Colonic mucosa (tissue), 4 donors: ENCODE measurements at regions of chr5 and their contacts with region 1.

Region 1: GRCh38 chr5:104186100-104186499 is 623.5 kb upstream of the NUDT12 start:
- DNase-seq: no peak
- H3K4me3 ChIP-seq: no peak overlapping the region
- H3K27ac ChIP-seq: no peak overlapping the region
- H3K4me1 ChIP-seq: no peaks in the 10 kb centered on the region
- H3K27me3 ChIP-seq: no peaks in the 10 kb centered on the region
- CTCF ChIP-seq: no peak

Region 2: DNA sequence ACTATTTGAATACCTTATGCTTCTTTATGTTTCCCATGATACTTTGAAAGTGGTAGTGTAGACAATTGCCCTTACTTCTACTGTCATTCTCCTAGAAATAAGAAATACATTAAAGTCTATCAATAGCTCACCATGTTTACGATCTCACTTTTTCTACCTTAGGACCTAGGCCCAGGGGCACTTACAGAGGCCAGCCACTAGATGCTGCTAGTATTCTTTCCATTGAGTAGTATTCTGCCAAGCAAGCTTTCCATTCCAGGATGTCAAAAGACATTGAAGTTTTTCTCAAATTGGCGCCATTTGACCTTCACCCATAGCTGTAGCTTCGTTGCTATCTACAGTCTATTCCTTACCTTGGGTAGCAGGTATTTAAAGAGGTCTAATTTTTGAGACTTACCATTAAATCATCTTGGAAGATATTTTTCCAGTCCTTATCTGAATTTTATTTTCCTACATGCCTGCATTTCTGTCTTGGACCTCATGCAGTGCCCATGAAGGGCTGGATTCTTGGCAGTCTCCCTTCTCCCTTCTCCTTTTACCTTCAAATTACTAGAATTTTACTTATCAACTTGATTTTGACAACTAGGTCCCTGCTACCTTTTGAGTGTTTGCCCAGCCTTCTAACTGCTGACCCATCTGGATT is 377.5 kb before region 1 on chr5:
- intact Hi-C with region 1: loop called (anchors 10 kb)
- DNase-seq: peak; percentile 21
- H3K4me3 ChIP-seq: no peak overlapping the region
- H3K27ac ChIP-seq: no peak overlapping the region
- H3K4me1 ChIP-seq: no peaks in the 10 kb centered on the region
- H3K27me3 ChIP-seq: no peaks in the 10 kb centered on the region
- CTCF ChIP-seq: peak; percentile 81

Region 3: DNA sequence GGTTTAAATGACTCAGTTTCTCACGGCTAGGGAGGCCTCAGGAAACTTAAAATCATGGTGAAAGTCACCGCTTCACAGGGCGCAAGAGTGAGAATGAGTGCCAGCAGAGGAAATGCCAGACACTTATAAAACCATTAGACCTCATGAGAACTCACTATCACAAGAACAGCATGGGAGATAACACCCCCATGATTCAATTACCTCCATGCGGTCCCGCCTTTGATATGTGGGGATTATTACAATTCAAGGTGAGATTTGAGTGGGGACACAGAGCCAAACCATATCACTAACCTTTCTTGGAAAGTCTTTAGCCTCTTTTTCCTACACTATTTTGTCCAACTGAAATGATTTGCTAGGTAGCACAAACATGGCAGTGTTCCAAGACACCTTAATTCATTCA is 89.6 kb before region 1 on chr5:
- intact Hi-C with region 1: no loop called
- DNase-seq: no peak
- H3K4me3 ChIP-seq: no peak overlapping the region
- H3K27ac ChIP-seq: no peak overlapping the region
- H3K4me1 ChIP-seq: no peaks in the 10 kb centered on the region
- H3K27me3 ChIP-seq: no peaks in the 10 kb centered on the region
- CTCF ChIP-seq: no peak